Sigmoid colon (tissue), 7 donors: ENCODE measurements at regions of chr4 and their contacts with region 1.

Region 1: GRCh38 chr4:173420324-173420752 is 21.4 kb upstream of the SCRG1 start:
- DNase-seq: no peak
- H3K4me3 ChIP-seq: no peak overlapping the region
- H3K27ac ChIP-seq: no peak overlapping the region
- H3K4me1 ChIP-seq: peaks cover 0 to 20% (median 4%) of the 10 kb centered on the region in 4 donors
- H3K27me3 ChIP-seq: no peaks in the 10 kb centered on the region
- CTCF ChIP-seq: peak; percentile 31 to 57 (median 51)
- EP300 ChIP-seq: no peak
- POLR2A ChIP-seq: no peak

Region 2: DNA sequence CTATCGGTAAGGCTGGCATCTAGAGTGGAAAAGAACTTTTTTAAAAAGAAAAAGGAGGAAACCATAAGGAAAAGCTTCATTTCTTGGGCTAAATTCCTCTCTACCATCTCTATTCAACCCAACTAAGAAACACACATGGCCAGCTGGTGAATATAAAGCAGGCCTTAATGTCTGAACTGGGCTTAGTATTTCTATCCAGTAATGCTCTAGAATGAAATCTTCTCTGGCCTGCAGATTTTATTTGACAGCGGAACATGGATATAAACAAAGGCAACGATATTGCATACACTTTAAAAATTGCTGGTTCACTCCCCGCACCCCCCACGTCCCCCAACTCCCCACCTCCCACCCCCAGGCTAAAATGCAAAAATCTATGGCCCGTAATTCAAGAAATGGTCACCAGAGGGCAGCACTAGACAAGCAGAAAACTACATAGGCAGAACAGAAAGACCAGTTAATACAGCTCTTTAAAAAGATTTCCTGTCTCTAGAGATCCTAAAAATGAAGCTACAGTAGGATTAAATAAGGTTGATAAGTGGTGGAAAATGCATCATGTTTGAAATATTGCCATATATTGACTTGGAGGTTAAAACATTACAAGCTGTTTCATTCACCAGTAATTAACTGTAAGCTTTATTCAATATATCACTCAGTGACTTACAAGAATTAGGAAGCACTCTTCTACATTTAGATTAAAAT is 407.0 kb before region 1 on chr4:
- intact Hi-C with region 1: loop called (anchors 5 kb)
- DNase-seq: no peak
- H3K4me3 ChIP-seq: no peak overlapping the region
- H3K27ac ChIP-seq: no peak overlapping the region
- H3K4me1 ChIP-seq: no peaks in the 10 kb centered on the region
- H3K27me3 ChIP-seq: no peaks in the 10 kb centered on the region
- CTCF ChIP-seq: peak; percentile 19 to 82 (median 45)
- EP300 ChIP-seq: no peak
- POLR2A ChIP-seq: no peak

Region 3: DNA sequence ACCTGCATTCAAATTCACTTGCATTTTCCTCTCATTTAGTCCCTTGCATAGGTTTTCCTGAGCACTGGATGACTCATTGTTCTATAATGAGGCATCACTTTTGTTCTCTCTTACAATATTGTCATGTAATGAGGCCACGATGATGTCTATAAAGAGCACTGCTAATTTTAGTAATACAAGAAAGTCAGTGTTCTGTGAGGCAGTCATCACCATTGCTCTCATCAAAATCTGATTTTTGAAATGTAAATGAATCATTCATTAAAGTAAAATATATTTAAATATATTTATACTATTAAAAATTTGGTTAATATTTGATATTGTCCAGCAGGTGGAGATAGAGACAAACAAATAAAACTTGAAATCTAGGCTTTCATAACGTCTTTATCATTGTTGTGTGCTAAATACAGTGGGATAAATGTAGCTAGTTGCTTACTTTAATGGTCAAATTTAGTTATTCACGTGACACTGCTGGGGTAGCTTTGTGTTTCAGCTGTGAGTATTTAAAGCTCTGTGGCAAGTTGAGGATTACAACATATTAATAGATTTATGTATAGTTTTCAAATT is 101.6 kb before region 1 on chr4:
- intact Hi-C with region 1: loop called (anchors 1 kb)
- DNase-seq: no peak
- H3K4me3 ChIP-seq: no peak overlapping the region
- H3K27ac ChIP-seq: no peak overlapping the region
- H3K4me1 ChIP-seq: peaks cover 0 to 4% (median 2%) of the 10 kb centered on the region in 4 donors
- H3K27me3 ChIP-seq: no peaks in the 10 kb centered on the region
- CTCF ChIP-seq: peak in 3 of 4 experiments; percentile 33 to 37 (median 34)
- EP300 ChIP-seq: no peak
- POLR2A ChIP-seq: no peak

Region 4: GRCh38 chr4:173346074-173346473 is 74.3 kb before region 1 on chr4:
- intact Hi-C with region 1: no loop called
- DNase-seq: no peak
- H3K4me3 ChIP-seq: no peak overlapping the region
- H3K27ac ChIP-seq: no peak overlapping the region
- H3K4me1 ChIP-seq: no peaks in the 10 kb centered on the region
- H3K27me3 ChIP-seq: no peaks in the 10 kb centered on the region
- CTCF ChIP-seq: no peak
- EP300 ChIP-seq: no peak
- POLR2A ChIP-seq: no peak

Region 5: GRCh38 chr4:173370477-173371291 is 49.7 kb before region 1 on chr4 and contains the start of gene SAP30:
- intact Hi-C with region 1: loop called (anchors 5 kb)
- DNase-seq: peak; percentile 100
- H3K4me3 ChIP-seq: peak within 1 kb of the TSS; percentile 82 to 91 (median 90)
- H3K27ac ChIP-seq: peak within 1 kb of the TSS; percentile 94 to 98 (median 97)
- H3K4me1 ChIP-seq: peaks cover 0 to 52% (median 39%) of the 10 kb centered on the region in 4 donors
- H3K27me3 ChIP-seq: no peaks in the 10 kb centered on the region
- CTCF ChIP-seq: no peak
- EP300 ChIP-seq: peak in 1 of 4 donors; percentile 24
- POLR2A ChIP-seq: peak; percentile 99
- total RNA-seq, gene SAP30: 39.6 to 61.4 (median 53.1) TPM

Region 6: GRCh38 chr4:173494013-173494970 is 74.0 kb after region 1 on chr4:
- intact Hi-C with region 1: loop called (anchors 1 kb)
- DNase-seq: peak; percentile 87
- H3K4me3 ChIP-seq: peak overlapping the region; percentile 13 to 51 (median 49)
- H3K27ac ChIP-seq: peak overlapping the region in 3 of 4 donors; percentile 43 to 61 (median 51)
- H3K4me1 ChIP-seq: peaks cover 0 to 28% (median 23%) of the 10 kb centered on the region in 4 donors
- H3K27me3 ChIP-seq: no peaks in the 10 kb centered on the region
- CTCF ChIP-seq: peak; percentile 73 to 86 (median 78)
- EP300 ChIP-seq: no peak
- POLR2A ChIP-seq: no peak

Region 7: GRCh38 chr4:174324725-174325124 is 904.4 kb after region 1 on chr4:
- intact Hi-C with region 1: loop called (anchors 5 kb)
- DNase-seq: no peak
- H3K4me3 ChIP-seq: no peak overlapping the region
- H3K27ac ChIP-seq: no peak overlapping the region
- H3K4me1 ChIP-seq: no peaks in the 10 kb centered on the region
- H3K27me3 ChIP-seq: no peaks in the 10 kb centered on the region
- CTCF ChIP-seq: no peak
- EP300 ChIP-seq: no peak
- POLR2A ChIP-seq: no peak